Calu3 (cell line): ENCODE measurements at regions of chr9 and their contacts with region 1.

Region 1: GRCh38 chr9:21812946-21813568 is 10.6 kb downstream of the MTAP start:
- DNase-seq: peak; percentile 77
- H3K4me3 Mint-ChIP-seq: no peak overlapping the region
- H3K27ac Mint-ChIP-seq: peak overlapping the region; percentile 23
- H3K4me1 Mint-ChIP-seq: peaks cover 41% of the 10 kb centered on the region
- H3K27me3 Mint-ChIP-seq: no peaks in the 10 kb centered on the region
- CTCF ChIP-seq: peak; percentile 72

Region 2: DNA sequence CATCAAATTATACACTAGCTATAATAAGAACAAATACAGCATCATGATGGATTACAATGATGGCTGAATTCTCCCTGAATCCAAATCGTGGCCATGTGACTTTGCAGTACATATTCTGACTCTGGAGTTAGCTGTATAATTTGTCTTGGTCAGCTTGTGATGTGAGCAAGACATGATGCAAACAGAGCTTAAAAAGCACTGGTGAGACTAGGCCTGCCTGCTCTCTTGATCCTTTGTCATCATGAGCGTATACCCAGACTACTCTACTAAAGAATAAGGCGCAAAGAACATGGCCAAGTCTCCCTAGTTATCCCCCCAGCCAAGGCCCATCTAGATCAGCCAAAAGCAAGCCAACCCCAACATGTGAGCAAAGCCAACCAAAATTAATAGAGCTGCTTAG is 296.3 kb before region 1 on chr9:
- CTCF ChIA-PET with region 1: no interaction called
- intact Hi-C with region 1: no loop called
- DNase-seq: no peak
- H3K4me3 Mint-ChIP-seq: no peak overlapping the region
- H3K27ac Mint-ChIP-seq: no peak overlapping the region
- H3K4me1 Mint-ChIP-seq: peaks cover 31% of the 10 kb centered on the region
- H3K27me3 Mint-ChIP-seq: no peaks in the 10 kb centered on the region
- CTCF ChIP-seq: no peak

Region 3: GRCh38 chr9:21974548-21975409 is 161.7 kb after region 1 on chr9:
- CTCF ChIA-PET with region 1: no interaction called
- intact Hi-C with region 1: loop called (anchors 5 kb)
- DNase-seq: peak; percentile 83
- H3K4me3 Mint-ChIP-seq: peak overlapping the region; percentile 97
- H3K27ac Mint-ChIP-seq: peak overlapping the region; percentile 91
- H3K4me1 Mint-ChIP-seq: peaks cover 30% of the 10 kb centered on the region
- H3K27me3 Mint-ChIP-seq: no peaks in the 10 kb centered on the region
- CTCF ChIP-seq: no peak

Region 4: GRCh38 chr9:22008736-22009562 is 195.9 kb after region 1 on chr9 and contains the start of gene CDKN2B:
- CTCF ChIA-PET with region 1: interaction called, 8 read pairs
- intact Hi-C with region 1: loop called (anchors 1 kb)
- DNase-seq: peak; percentile 96
- H3K4me3 Mint-ChIP-seq: peak within 1 kb of the TSS; percentile 96
- H3K27ac Mint-ChIP-seq: peak within 1 kb of the TSS; percentile 53
- H3K4me1 Mint-ChIP-seq: peaks cover 16% of the 10 kb centered on the region
- H3K27me3 Mint-ChIP-seq: no peaks in the 10 kb centered on the region
- CTCF ChIP-seq: peak; percentile 91
- total RNA-seq, gene CDKN2B: 30.4 and 35.2 TPM in 2 replicates

Region 5: GRCh38 chr9:22105005-22105722 is 292.1 kb after region 1 on chr9:
- CTCF ChIA-PET with region 1: no interaction called
- intact Hi-C with region 1: loop called (anchors 10 kb)
- DNase-seq: no peak
- H3K4me3 Mint-ChIP-seq: no peak overlapping the region
- H3K27ac Mint-ChIP-seq: peak overlapping the region; percentile 86
- H3K4me1 Mint-ChIP-seq: peaks cover 69% of the 10 kb centered on the region
- H3K27me3 Mint-ChIP-seq: no peaks in the 10 kb centered on the region
- CTCF ChIP-seq: no peak

Region 6: DNA sequence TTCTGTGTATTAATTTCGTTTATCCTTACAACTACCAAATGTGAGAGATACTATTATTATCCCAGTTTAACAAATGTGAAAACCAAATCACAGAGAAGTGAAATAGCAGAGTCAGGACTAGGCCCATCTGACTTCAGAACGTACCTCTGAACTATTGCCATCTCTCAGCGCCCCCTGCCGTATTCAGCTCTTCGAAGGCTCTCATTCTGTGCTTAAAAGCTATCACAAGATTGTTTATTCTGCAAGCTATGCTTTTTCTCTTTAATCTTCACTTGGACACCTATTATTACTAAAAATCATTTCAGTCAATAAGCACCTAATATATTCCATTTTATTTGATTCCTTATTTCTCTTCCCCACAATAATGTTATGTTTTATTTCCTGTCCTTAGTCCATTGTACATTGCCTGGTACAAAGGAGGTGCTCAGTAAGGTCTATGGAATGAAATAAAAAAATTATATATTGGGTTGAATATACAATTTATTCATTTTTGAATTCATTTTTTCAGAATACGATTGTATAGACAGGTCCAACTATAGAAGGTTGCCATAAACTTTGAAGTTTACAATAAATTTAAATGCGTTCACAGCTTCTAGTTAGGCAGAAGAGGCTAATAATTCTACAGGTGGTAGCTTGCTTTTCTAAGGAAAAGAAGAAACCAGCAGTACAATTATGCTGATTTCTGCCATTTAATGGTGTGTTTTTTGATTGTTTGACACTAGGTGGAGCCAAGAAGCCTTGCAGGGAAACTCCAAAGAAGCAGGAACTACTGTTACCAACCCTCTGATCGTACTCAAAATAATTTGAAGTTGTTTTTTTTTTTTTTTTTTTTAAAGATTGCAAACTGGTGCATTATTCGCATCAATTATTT is 431.3 kb after region 1 on chr9:
- CTCF ChIA-PET with region 1: interaction called, 12 read pairs
- intact Hi-C with region 1: loop called (anchors 1 kb)
- DNase-seq: peak; percentile 63
- H3K4me3 Mint-ChIP-seq: no peak overlapping the region
- H3K27ac Mint-ChIP-seq: no peak overlapping the region
- H3K4me1 Mint-ChIP-seq: peaks cover 53% of the 10 kb centered on the region
- H3K27me3 Mint-ChIP-seq: no peaks in the 10 kb centered on the region
- CTCF ChIP-seq: peak; percentile 40

Region 7: GRCh38 chr9:22452415-22453010 is 639.5 kb after region 1 on chr9:
- CTCF ChIA-PET with region 1: no interaction called
- intact Hi-C with region 1: loop called (anchors 5 kb)
- DNase-seq: peak; percentile 36
- H3K4me3 Mint-ChIP-seq: no peak overlapping the region
- H3K27ac Mint-ChIP-seq: no peak overlapping the region
- H3K4me1 Mint-ChIP-seq: peaks cover 7% of the 10 kb centered on the region
- H3K27me3 Mint-ChIP-seq: no peaks in the 10 kb centered on the region
- CTCF ChIP-seq: peak; percentile 57